ENCODE measurements at regions of chr3 and their contacts with region 1.

Region 1: GRCh38 chr3:184145111-184145524 is 10.0 kb downstream of the EIF2B5 start:
- DNase-seq: peak; percentile 51 to 55
- H3K4me3 ChIP-seq: no peak overlapping the region
- H3K27ac ChIP-seq: no peak overlapping the region
- H3K4me1 ChIP-seq: no peaks in the 10 kb centered on the region
- H3K27me3 ChIP-seq: no peaks in the 10 kb centered on the region
- CTCF ChIP-seq: peak in 3 of 6 experiments; percentile 45 to 50 (median 47)
- POLR2A ChIP-seq: no peak

Region 2: DNA sequence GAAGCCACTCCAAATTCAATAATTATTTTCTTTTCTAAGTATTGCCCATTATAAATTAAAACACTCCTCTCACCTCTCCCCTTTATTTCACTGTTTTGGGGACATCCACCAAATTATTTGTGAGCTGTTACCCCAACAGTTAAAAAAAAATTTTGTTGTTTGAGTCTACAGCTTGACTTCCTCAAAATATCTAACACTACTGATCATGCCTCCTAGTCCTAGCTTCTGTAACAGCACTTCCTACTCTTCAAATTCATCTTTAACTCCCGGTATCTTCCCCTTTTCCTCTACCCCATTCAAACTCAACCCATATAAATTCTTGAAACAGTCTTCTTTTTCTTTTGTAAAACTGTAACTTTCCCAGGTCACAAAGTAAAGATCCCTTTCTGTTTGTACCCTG is 276.3 kb before region 1 on chr3:
- intact Hi-C with region 1: no loop called
- DNase-seq: no peak
- H3K4me3 ChIP-seq: no peak overlapping the region
- H3K27ac ChIP-seq: no peak overlapping the region
- H3K4me1 ChIP-seq: no peaks in the 10 kb centered on the region
- H3K27me3 ChIP-seq: no peaks in the 10 kb centered on the region
- CTCF ChIP-seq: no peak
- POLR2A ChIP-seq: no peak

Region 3: DNA sequence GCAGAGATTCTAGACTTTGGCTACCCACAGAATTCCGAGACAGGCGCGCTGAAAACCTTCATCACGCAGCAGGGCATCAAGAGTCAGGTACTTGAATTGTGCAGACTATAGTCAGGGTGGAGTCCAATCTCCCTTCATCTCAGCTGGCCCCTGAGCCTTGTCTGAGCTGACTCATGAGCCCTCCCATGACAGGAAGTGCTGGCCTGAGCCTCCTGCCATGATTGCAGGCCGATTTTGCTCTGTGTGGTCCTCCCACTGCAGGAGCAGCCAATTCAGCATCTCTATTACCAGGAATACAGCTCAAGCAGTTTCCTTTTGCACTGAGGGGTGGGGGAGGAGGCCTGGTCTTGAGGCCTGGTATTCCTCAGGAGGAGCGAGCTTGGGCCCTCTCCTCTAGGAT is 35.0 kb after region 1 on chr3:
- intact Hi-C with region 1: loop called (anchors 5 kb)
- DNase-seq: no peak
- H3K4me3 ChIP-seq: no peak overlapping the region
- H3K27ac ChIP-seq: no peak overlapping the region
- H3K4me1 ChIP-seq: peaks cover 21 to 24% of the 10 kb centered on the region in 2 donors
- H3K27me3 ChIP-seq: no peaks in the 10 kb centered on the region
- CTCF ChIP-seq: no peak
- POLR2A ChIP-seq: no peak

Region 4: GRCh38 chr3:184241447-184242296 is 96.6 kb after region 1 on chr3:
- intact Hi-C with region 1: loop called (anchors 5 kb)
- DNase-seq: peak; percentile 87 to 91
- H3K4me3 ChIP-seq: peak overlapping the region in 1 of 3 donors; percentile 17
- H3K27ac ChIP-seq: no peak overlapping the region
- H3K4me1 ChIP-seq: peaks cover 9 to 12% of the 10 kb centered on the region in 2 donors
- H3K27me3 ChIP-seq: no peaks in the 10 kb centered on the region
- CTCF ChIP-seq: peak in 5 of 6 experiments; percentile 53 to 72 (median 64)
- POLR2A ChIP-seq: peak in 1 of 2 donors; percentile 26

Measured in thyroid gland (tissue), 4 donors.